SK-N-SH (cell line): ENCODE measurements at regions of chr12 and their contacts with region 1.

Region 1: DNA sequence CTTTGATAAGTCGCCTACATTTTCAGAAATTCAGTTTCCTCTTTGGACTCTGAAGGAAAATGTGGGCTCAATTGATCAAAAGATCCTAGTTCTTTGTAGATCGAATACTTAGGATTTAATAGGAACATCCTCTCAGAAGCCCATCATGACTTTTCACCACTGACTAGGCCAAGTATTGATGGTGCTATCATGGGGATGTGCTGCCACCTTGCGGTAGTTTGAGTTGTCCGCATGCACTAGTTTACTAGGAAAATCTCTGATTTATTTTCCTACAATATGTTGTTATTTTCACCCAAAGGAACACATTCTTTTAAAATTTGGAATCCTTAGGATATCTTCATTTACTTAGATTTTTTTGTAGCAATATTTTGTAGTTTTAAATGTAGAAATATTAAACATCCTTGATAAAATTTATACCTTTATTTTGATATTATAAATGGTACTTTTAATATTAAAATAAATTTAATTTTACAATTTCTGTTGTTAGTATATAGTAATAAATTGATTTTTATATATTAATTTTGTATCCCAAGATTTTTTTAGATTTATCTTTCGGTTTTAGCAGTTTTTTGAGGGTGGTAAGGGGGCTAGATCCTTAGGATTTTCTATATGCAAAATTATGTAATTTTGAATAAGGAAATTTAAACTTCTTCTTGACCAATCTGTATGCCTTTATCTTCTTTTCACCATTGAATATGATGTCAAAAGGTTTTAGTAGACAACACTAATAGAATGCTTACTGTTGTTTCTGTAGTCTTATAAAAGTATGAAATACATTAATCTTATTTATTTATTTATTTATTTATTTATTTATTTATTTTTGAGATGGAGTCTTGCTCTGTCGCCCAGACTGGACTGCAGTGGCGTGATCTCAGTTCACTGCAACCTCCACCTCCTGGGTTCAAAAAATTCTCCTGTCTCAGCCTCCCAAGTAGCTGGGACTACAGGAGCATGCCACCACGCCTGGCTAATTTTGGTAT is 52.9 kb upstream of the OR9K2 start:
- DNase-seq: peak; percentile 52
- H3K4me3 ChIP-seq: no peak overlapping the region; a peak in 1 of 4 replicates
- H3K27ac ChIP-seq: no peak overlapping the region
- H3K4me1 ChIP-seq: no peaks in the 10 kb centered on the region
- H3K27me3 ChIP-seq: no peaks in the 10 kb centered on the region
- CTCF ChIP-seq: peak; percentile 94
- EP300 ChIP-seq: no peak
- RAD21 ChIP-seq: peak; percentile 83

Region 2: GRCh38 chr12:54998958-54999510 is 74.3 kb before region 1 on chr12:
- CTCF ChIA-PET with region 1: interaction called, 62 read pairs
- POLR2A ChIA-PET with region 1: no interaction called
- DNase-seq: no peak
- H3K4me3 ChIP-seq: no peak overlapping the region
- H3K27ac ChIP-seq: no peak overlapping the region
- H3K4me1 ChIP-seq: no peaks in the 10 kb centered on the region
- H3K27me3 ChIP-seq: peaks cover 36% of the 10 kb centered on the region; the same call in 1 of the 2 replicates
- CTCF ChIP-seq: no peak
- EP300 ChIP-seq: no peak
- RAD21 ChIP-seq: no peak

Region 3: GRCh38 chr12:55034218-55034617 is 39.1 kb before region 1 on chr12:
- CTCF ChIA-PET with region 1: interaction called, 10 read pairs
- POLR2A ChIA-PET with region 1: no interaction called
- DNase-seq: no peak
- H3K4me3 ChIP-seq: no peak overlapping the region
- H3K27ac ChIP-seq: no peak overlapping the region
- H3K4me1 ChIP-seq: no peaks in the 10 kb centered on the region
- H3K27me3 ChIP-seq: no peaks in the 10 kb centered on the region; the same call in 1 of the 2 replicates
- CTCF ChIP-seq: no peak
- EP300 ChIP-seq: no peak
- RAD21 ChIP-seq: no peak

Region 4: DNA sequence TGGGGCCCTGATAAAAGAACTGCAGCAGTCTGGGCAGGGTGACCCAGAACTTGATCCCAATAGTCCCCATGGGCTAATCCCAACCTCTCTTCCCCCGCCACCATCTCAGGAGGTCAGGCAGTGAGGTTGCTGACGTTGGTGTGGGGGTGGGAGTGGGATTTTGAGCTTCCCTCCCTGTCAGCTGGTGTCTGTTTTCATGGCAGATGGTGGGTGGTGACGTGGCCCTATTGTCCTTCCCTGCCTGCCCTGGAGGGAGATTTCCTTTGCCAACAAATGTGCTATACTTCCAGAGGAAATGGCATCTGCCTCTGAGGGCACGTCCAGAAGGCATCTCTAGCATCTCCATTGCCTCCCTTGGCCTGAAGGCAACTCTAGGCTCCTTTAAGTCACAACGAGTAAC is 15.9 kb before region 1 on chr12:
- CTCF ChIA-PET with region 1: interaction called, 11 read pairs
- POLR2A ChIA-PET with region 1: no interaction called
- DNase-seq: no peak
- H3K4me3 ChIP-seq: no peak overlapping the region
- H3K27ac ChIP-seq: no peak overlapping the region
- H3K4me1 ChIP-seq: no peaks in the 10 kb centered on the region
- H3K27me3 ChIP-seq: no peaks in the 10 kb centered on the region; the same call in 1 of the 2 replicates
- CTCF ChIP-seq: no peak
- EP300 ChIP-seq: no peak
- RAD21 ChIP-seq: no peak

Region 5: DNA sequence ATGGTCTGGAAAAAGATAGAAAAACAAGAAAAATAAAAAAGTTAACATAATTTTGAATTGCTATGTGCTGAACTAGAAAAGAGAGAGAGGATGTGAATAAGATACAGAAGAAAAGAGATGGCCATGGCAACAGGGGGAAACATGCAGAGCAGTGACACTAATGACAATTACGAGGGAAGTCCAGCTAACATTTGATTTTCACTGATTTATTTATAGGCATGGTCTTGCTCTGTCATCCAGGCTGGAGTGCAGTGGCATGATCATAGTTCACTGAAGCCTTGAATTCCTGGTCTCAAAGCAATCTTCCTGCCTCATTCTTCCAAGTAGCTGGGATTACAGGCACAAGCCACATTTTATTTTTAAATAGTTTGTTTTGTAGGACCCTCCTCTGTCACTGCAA is 172.8 kb after region 1 on chr12:
- CTCF ChIA-PET with region 1: no interaction called
- POLR2A ChIA-PET with region 1: no interaction called
- DNase-seq: no peak
- H3K4me3 ChIP-seq: no peak overlapping the region
- H3K27ac ChIP-seq: no peak overlapping the region
- H3K4me1 ChIP-seq: no peaks in the 10 kb centered on the region
- H3K27me3 ChIP-seq: no peaks in the 10 kb centered on the region; the same call in 1 of the 2 replicates
- CTCF ChIP-seq: no peak
- EP300 ChIP-seq: no peak
- RAD21 ChIP-seq: no peak

Region 6: GRCh38 chr12:55280991-55281390 is 207.7 kb after region 1 on chr12:
- CTCF ChIA-PET with region 1: no interaction called
- POLR2A ChIA-PET with region 1: no interaction called
- DNase-seq: no peak
- H3K4me3 ChIP-seq: no peak overlapping the region
- H3K27ac ChIP-seq: no peak overlapping the region
- H3K4me1 ChIP-seq: no peaks in the 10 kb centered on the region
- H3K27me3 ChIP-seq: no peaks in the 10 kb centered on the region
- CTCF ChIP-seq: no peak
- EP300 ChIP-seq: no peak
- RAD21 ChIP-seq: no peak